Vagina (tissue), 2 donors: ENCODE measurements at regions of chr1 and their contacts with region 1.

Region 1: DNA sequence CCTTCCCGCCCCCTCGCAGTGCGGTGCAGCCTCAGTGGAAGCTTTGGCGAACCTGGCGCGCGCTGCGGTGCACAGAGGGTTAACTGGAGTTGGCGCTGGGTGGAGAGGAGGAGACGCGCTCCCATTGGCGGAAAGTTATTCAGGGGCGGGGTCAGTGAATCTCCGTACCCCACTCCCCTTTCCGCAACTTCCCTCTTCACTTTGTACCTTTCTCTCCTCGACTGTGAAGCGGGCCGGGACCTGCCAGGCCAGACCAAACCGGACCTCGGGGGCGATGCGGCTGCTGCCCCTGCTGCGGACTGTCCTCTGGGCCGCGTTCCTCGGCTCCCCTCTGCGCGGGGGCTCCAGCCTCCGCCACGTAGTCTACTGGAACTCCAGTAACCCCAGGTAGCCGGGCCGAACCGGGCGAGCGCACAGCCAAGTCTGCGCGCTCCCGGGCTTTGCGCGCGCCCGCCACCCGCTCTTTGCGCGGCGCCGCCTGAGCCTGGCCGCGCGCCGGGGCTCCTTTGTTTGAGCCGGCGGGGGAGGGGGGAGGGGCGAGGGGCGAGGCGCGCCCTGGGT is at the start of gene EFNA4:
- DNase-seq: no peak
- H3K4me3 ChIP-seq: peak within 1 kb of the TSS; percentile 71 to 84
- H3K27ac ChIP-seq: peak within 1 kb of the TSS; percentile 79
- H3K4me1 ChIP-seq: peaks cover 34% of the 10 kb centered on the region
- H3K27me3 ChIP-seq: no peaks in the 10 kb centered on the region
- CTCF ChIP-seq: no peak
- POLR2A ChIP-seq: peak in 1 of 2 donors; percentile 7
- total RNA-seq, gene EFNA4: 13.8 TPM

Region 2: DNA sequence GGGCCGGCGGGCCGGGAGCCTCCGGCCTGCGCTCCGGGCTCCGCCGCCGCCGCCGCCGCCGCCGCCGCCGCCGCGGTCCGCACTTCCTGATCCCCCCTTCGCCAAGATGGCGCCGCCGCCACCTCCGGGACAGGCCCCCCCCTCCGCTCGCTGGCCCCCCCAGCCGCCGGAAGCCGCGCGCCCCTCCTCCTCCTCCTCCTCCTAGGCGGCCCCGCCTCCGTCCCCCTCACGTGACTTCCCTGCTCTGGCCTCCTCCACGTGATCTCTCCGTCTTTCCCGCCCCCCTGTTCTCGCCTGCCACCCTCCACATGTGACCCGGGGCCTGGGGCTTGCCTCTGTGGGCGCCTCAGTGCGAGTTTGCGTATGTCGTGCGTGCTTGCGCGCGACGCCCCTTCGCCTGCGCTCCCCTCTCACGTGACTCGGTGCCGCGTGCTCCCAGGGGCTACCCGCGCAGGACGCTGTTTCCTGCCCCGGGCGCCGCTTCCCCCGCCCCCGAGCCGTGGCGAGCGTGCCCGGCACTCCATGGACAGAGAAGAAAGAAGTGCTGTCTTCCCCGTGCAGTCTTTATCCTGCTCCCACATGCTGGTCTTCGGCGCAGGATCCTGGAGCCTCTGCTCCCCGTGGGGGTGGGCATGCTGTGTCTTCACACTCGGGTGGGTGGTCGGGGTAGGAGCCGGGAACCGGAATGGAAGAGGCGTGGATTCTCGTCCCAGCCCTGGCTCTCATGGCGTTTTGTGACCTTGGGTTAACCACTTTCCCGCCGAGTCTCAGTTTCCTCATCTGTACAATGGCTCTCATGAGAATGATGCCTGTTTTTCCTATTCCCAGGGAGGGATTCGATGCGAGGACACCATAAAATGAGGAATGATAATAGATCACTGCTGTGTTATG is 504.8 kb before region 1 on chr1 and contains the start of gene UBE2Q1:
- intact Hi-C with region 1: loop called (anchors 10 kb)
- DNase-seq: peak in 1 of 2 donors; percentile 99
- H3K4me3 ChIP-seq: peak within 1 kb of the TSS; percentile 78 to 85
- H3K27ac ChIP-seq: peak within 1 kb of the TSS; percentile 90
- H3K4me1 ChIP-seq: peaks cover 32% of the 10 kb centered on the region
- H3K27me3 ChIP-seq: no peaks in the 10 kb centered on the region
- CTCF ChIP-seq: no peak
- POLR2A ChIP-seq: peak in 1 of 2 donors; percentile 22
- total RNA-seq, gene UBE2Q1: 17.9 TPM

Region 3: DNA sequence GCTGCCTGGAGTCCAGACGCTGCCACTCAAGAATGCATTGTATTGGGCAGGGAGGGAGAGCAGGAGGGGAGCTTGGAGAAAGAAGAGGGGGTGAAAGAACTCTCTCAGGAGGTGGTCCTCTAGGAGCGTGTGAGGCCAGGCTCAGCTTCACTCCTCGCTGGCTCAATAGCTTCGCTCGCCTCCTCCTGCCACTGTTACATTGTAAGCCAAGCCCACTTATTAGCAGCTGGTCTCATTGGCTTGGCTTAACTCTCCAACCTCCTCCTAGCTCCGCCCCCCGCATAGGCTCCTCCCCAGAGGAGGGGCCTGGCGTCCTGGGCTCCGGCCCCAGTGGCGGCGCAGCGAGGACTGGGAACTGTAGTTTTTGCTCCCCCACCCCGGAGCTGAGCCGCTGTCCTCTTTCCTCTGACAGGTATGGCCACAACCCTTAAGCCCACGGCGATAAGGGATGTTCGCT is 193.5 kb before region 1 on chr1 and contains the start of gene KCNN3:
- intact Hi-C with region 1: no loop called
- DNase-seq: peak in 1 of 2 donors; percentile 94
- H3K4me3 ChIP-seq: peak within 1 kb of the TSS; percentile 41
- H3K27ac ChIP-seq: peak within 1 kb of the TSS; percentile 50
- H3K4me1 ChIP-seq: peaks cover 34% of the 10 kb centered on the region
- H3K27me3 ChIP-seq: no peaks in the 10 kb centered on the region
- CTCF ChIP-seq: no peak
- POLR2A ChIP-seq: peak in 1 of 2 donors; percentile 27
- total RNA-seq, gene KCNN3: 7.4 TPM

Region 4: GRCh38 chr1:154936555-154937084 is 127.0 kb before region 1 on chr1 and contains the start of gene PMVK:
- intact Hi-C with region 1: loop called (anchors 5 kb)
- DNase-seq: peak in 1 of 2 donors; percentile 98
- H3K4me3 ChIP-seq: peak within 1 kb of the TSS; percentile 56 to 87
- H3K27ac ChIP-seq: peak within 1 kb of the TSS; percentile 99
- H3K4me1 ChIP-seq: peaks cover 54% of the 10 kb centered on the region
- H3K27me3 ChIP-seq: no peaks in the 10 kb centered on the region
- CTCF ChIP-seq: peak; percentile 3 to 51 (median 29)
- POLR2A ChIP-seq: peak; percentile 9 to 45
- total RNA-seq, gene PMVK: 20.6 TPM

Region 5: DNA sequence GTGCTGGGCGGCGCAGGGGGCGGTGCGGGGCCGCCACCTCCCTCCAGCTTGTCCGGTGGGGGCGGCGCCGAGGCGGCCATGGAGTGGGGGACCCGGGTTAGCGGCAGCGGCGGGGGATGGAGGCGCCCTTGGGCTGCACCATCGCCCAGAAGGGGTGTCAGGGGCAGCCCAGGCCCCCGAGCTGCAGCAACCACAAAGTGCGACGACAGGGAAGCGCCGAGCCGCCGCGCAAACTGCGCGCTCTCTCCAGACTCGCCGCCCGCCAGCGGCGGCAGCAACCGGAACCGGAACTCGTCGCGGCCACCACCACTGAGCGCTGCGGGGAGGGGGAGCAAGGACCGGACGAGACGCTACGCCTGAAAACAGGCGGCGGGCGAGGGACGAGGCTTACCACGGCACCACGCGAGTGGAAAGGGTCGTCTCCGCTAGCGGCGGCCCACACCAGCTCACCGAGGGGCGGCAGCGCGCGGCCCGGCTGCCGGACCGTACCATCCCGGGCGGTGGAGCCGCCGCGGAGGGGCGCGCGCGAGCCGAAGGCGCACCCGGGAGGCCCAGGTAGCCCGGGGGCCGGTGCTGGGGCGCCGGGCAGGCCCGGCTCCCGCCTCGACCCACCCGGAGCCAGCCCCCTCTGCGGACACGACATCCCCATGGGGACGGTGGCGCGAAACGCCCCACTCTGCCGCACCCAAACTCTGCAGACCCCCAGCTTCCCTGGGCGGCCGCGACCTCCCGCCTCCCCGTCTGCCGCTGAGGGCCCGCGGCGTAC is 102.0 kb before region 1 on chr1 and contains the start of gene PYGO2:
- intact Hi-C with region 1: loop called (anchors 10 kb)
- DNase-seq: no peak
- H3K4me3 ChIP-seq: peak within 1 kb of the TSS; percentile 73 to 91
- H3K27ac ChIP-seq: peak within 1 kb of the TSS; percentile 97
- H3K4me1 ChIP-seq: peaks cover 42% of the 10 kb centered on the region
- H3K27me3 ChIP-seq: no peaks in the 10 kb centered on the region
- CTCF ChIP-seq: peak; percentile 56 to 72 (median 70)
- POLR2A ChIP-seq: peak in 1 of 2 donors; percentile 42
- total RNA-seq, gene PYGO2: 19.2 TPM

Region 6: GRCh38 chr1:155084722-155085503 is 21.3 kb after region 1 on chr1:
- intact Hi-C with region 1: loop called (anchors 2 kb)
- DNase-seq: no peak
- H3K4me3 ChIP-seq: peak overlapping the region; percentile 62 to 66
- H3K27ac ChIP-seq: peak overlapping the region; percentile 93
- H3K4me1 ChIP-seq: peaks cover 59% of the 10 kb centered on the region
- H3K27me3 ChIP-seq: peaks cover 24% of the 10 kb centered on the region
- CTCF ChIP-seq: peak; percentile 89 to 99 (median 93)
- POLR2A ChIP-seq: peak in 1 of 2 donors; percentile 2

Region 7: GRCh38 chr1:155193275-155193990 is 129.8 kb after region 1 on chr1:
- intact Hi-C with region 1: no loop called
- DNase-seq: no peak
- H3K4me3 ChIP-seq: peak overlapping the region; percentile 52 to 58
- H3K27ac ChIP-seq: peak overlapping the region; percentile 85
- H3K4me1 ChIP-seq: peaks cover 39% of the 10 kb centered on the region
- H3K27me3 ChIP-seq: no peaks in the 10 kb centered on the region
- CTCF ChIP-seq: peak; percentile 79 to 96 (median 90)
- POLR2A ChIP-seq: no peak